GM12878 (cell line): ENCODE measurements at regions of chr6 and their contacts with region 1.

Region 1: GRCh38 chr6:27893059-27893835 is 18.9 kb downstream of the OR2B2 start:
- DNase-seq: peak; percentile 98
- ATAC-seq: peak; percentile 60
- H3K4me3 ChIP-seq: peak overlapping the region; percentile 97
- H3K27ac ChIP-seq: peak overlapping the region; percentile 92
- H3K4me1 ChIP-seq: peaks cover 13% of the 10 kb centered on the region; the same call in 1 of the 2 replicates
- H3K27me3 ChIP-seq: no peaks in the 10 kb centered on the region
- CTCF ChIP-seq: no peak
- EP300 ChIP-seq: no peak
- POLR2A ChIP-seq: peak; percentile 96
- RAD21 ChIP-seq: no peak

Region 2: GRCh38 chr6:26234421-26235296 is 1658.6 kb before region 1 on chr6:
- CTCF ChIA-PET with region 1: no interaction called
- POLR2A ChIA-PET with region 1: interaction called, 3 read pairs
- RAD21 ChIA-PET with region 1: no interaction called
- SMC1A ChIA-PET with region 1: no interaction called
- in situ Hi-C with region 1: no loop called
- intact Hi-C with region 1: loop called (anchors 10 kb)
- DNase-seq: peak; percentile 96
- ATAC-seq: peak; percentile 62
- H3K4me3 ChIP-seq: peak overlapping the region; percentile 83
- H3K27ac ChIP-seq: peak overlapping the region; percentile 95
- H3K4me1 ChIP-seq: peaks cover 2% of the 10 kb centered on the region
- H3K27me3 ChIP-seq: no peaks in the 10 kb centered on the region
- CTCF ChIP-seq: no peak; a peak in 1 of 6 replicates
- EP300 ChIP-seq: peak in 1 of 2 experiments; percentile 64; a peak in 2 of 4 replicates
- POLR2A ChIP-seq: peak; percentile 92
- RAD21 ChIP-seq: 0 out of 2 replicates have a peak, but pooled peaks have one; percentile 13

Region 3: DNA sequence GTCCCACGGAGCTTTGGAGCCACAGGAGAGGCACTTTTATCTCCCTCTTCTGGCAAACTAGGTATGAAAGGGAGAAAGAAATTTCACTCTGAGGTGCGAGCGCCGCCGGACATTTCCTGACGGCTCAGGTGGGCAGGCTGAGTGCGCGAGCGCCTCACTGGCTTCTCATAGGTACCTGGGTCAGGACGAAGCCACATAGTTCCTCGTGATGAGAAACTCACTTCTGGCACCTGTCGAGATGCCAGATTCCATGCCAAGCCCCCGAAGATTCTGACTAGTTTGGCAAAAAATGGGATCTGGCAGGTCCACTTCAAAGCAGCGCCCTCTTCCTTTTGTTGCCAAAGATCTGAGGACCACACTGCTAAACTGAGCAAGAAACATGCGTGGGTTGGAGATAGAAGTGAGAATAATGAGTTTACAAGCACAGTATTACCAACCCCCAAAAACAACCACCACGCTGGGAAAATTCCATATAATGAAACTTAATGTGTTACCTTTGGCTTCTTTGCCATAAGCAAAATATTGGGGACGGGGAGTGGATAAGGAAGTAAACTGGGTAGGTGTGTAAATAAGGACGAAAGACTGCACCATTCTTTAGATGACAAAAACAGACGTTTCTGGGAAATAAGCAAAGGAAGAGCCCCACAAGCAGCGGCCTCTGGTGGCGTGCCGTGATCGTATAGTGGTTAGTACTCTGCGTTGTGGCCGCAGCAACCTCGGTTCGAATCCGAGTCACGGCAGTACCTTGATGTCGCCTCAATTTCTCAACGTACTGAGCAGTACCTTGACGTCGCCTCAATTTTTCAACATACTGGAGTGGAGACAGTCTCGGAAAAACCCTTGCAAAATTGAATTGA is 735.6 kb before region 1 on chr6:
- CTCF ChIA-PET with region 1: interaction called, 8 read pairs
- POLR2A ChIA-PET with region 1: interaction called, 11 read pairs
- RAD21 ChIA-PET with region 1: interaction called, 4 read pairs
- SMC1A ChIA-PET with region 1: interaction called, 8 read pairs
- in situ Hi-C with region 1: no loop called
- intact Hi-C with region 1: no loop called
- DNase-seq: peak; percentile 66
- ATAC-seq: peak; percentile 83
- H3K4me3 ChIP-seq: peak overlapping the region; percentile 70
- H3K27ac ChIP-seq: peak overlapping the region; percentile 45
- H3K4me1 ChIP-seq: peaks cover 8% of the 10 kb centered on the region
- H3K27me3 ChIP-seq: no peaks in the 10 kb centered on the region
- CTCF ChIP-seq: peak in 2 of 3 experiments; percentile 56 to 63; a peak in 5 of 6 replicates
- EP300 ChIP-seq: peak in 1 of 2 experiments; percentile 74; a peak in 1 of 4 replicates
- POLR2A ChIP-seq: no peak
- RAD21 ChIP-seq: peak; percentile 43

Region 4: DNA sequence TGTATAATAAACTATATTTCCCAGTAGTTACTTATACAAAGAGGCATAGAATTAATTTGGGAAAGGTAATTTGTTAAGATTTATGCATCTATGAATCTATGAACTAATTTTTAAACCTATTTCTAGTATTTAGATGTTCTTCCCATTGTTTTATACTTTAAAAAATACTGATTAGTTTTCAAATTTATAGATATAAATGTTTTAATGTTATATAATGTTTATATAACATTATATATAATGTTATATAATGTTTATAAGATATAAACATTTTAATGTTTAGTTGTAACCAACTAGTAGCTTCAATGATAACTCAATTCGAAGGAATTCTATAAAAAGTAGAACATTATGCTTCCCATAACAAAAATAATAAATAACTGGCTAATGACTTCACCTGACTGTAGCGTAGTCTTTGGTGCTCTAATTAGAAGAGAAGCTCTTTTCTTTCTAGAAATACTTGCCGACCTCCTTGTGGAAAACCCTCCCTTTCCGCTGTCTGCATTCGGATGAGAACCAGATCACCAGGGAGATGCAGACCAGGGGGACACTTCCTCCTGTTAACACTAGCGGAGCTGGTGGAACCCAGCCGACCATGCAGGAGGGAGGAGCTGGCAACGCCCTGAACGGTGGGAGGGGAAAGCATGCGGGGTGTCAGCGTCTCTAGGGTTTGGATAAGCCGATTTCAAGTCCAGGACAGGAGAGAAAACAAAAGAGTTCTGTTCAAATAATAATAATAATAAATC is 139.4 kb before region 1 on chr6:
- CTCF ChIA-PET with region 1: interaction called, 7 read pairs
- POLR2A ChIA-PET with region 1: interaction called, 3 read pairs
- RAD21 ChIA-PET with region 1: interaction called, 10 read pairs
- SMC1A ChIA-PET with region 1: interaction called, 10 read pairs
- in situ Hi-C with region 1: no loop called
- intact Hi-C with region 1: no loop called
- DNase-seq: peak; percentile 72
- ATAC-seq: peak; percentile 84
- H3K4me3 ChIP-seq: peak overlapping the region; percentile 58
- H3K27ac ChIP-seq: peak overlapping the region; percentile 48
- H3K4me1 ChIP-seq: peaks cover 9% of the 10 kb centered on the region; the same call in 1 of the 2 replicates
- H3K27me3 ChIP-seq: no peaks in the 10 kb centered on the region
- CTCF ChIP-seq: peak in 2 of 3 experiments; percentile 5 to 15; a peak in 2 of 6 replicates
- EP300 ChIP-seq: no peak
- POLR2A ChIP-seq: peak; percentile 52; the same call in 1 of the 2 replicates
- RAD21 ChIP-seq: no peak

Region 5: DNA sequence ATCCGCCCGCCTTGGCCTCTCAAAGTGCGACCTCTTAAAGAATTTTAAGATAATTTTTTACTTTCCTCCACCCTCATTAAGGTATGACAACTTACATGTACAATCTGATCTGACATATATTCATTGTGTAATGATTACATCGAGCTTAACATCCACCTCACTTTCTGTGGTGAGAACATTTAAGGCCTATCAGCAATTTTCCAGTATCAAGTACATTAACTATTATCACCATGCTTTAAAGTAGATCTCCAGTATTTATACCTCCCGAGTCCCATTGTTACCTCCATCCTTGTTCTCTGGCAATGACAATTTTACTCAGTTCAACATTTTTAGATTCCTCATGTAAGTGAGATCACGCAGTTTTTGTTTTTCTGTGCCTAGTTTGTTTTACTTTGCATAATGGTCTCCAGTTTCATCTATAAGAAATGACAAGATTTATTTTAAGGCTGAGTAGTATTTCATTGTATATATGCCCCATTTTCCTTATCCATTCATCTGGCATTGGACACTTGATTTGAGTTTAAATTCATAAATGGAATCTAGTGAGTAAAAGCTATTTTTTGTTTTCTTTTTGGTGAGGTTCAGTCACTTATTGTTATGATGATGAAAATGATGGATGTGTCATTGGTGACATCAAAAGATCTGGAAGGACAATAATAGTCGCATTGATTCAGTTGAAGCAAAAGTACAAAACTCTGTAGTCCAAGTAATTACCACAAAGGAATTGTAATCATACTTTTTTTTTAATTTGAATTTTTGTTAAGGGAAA is 68.0 kb before region 1 on chr6:
- CTCF ChIA-PET with region 1: interaction called, 168 read pairs
- POLR2A ChIA-PET with region 1: interaction called, 125 read pairs
- RAD21 ChIA-PET with region 1: interaction called, 141 read pairs
- SMC1A ChIA-PET with region 1: interaction called, 160 read pairs
- in situ Hi-C with region 1: no loop called
- intact Hi-C with region 1: no loop called
- DNase-seq: no peak
- ATAC-seq: peak; percentile 7; the same call in 2 of the 3 replicates
- H3K4me3 ChIP-seq: peak overlapping the region; percentile 66
- H3K27ac ChIP-seq: peak overlapping the region; percentile 96
- H3K4me1 ChIP-seq: no peaks in the 10 kb centered on the region
- H3K27me3 ChIP-seq: no peaks in the 10 kb centered on the region
- CTCF ChIP-seq: no peak
- EP300 ChIP-seq: no peak
- POLR2A ChIP-seq: no peak
- RAD21 ChIP-seq: no peak

Region 6: DNA sequence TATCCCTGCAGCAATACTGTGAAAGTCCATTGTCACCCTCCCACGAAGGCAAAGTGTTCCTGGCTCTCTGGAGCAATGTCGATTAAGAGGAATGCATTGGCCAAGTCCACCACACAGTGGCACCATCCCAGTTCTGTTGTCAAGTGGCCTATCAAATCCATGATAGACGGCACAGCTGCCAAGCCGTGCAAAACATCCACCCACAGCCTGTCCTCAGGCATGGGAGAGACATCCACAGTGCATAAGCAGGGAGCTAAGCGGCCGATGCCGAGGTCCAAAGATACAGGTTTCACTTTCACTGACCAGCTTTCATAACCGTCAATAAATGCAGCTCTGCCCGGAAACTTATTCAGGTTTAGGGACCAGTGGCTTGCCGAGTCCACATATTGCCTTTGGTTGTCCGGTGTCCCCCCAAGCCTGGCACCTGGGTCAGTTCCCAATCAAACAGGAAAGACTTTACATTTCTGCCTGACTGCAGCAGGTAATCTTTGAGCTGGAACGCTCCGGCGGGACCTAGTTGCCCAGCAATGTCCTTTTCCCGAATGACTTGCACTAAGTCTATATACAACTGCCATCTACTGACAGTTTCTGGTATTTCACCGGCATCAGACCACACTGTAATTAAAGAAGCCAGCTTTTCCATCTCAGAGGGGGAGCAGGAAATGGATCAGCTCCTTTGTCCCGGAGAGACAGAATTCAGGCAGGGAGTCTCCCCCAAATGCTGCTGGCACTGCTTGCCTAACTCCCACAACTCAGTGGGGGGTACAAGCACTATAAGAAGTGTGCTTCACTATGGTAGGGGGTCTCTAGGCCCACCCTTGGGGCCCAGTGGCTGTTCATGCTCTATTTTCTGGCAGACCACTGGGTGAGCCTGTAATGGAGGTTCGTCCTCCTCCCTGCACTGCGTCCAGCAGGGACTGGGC is 462.8 kb after region 1 on chr6:
- CTCF ChIA-PET with region 1: interaction called, 44 read pairs
- POLR2A ChIA-PET with region 1: no interaction called
- RAD21 ChIA-PET with region 1: interaction called, 12 read pairs
- SMC1A ChIA-PET with region 1: interaction called, 21 read pairs
- in situ Hi-C with region 1: loop called (anchors 5 kb)
- intact Hi-C with region 1: loop called (anchors 5 kb)
- DNase-seq: peak; percentile 55
- ATAC-seq: peak; percentile 93
- H3K4me3 ChIP-seq: peak overlapping the region; percentile 67; the same call in 1 of the 2 replicates
- H3K27ac ChIP-seq: peak overlapping the region; percentile 59
- H3K4me1 ChIP-seq: peaks cover 3% of the 10 kb centered on the region; the same call in 1 of the 2 replicates
- H3K27me3 ChIP-seq: no peaks in the 10 kb centered on the region
- CTCF ChIP-seq: peak; percentile 71 to 76 (median 72)
- EP300 ChIP-seq: no peak
- POLR2A ChIP-seq: no peak
- RAD21 ChIP-seq: peak; percentile 88